ENCODE measurements at regions of chr2 and their contacts with region 1.

Region 1: GRCh38 chr2:67277450-67277849 is 119.7 kb upstream of the ETAA1 start:
- DNase-seq: no peak
- H3K4me3 ChIP-seq: no peak overlapping the region
- CTCF ChIP-seq: no peak

Region 2: DNA sequence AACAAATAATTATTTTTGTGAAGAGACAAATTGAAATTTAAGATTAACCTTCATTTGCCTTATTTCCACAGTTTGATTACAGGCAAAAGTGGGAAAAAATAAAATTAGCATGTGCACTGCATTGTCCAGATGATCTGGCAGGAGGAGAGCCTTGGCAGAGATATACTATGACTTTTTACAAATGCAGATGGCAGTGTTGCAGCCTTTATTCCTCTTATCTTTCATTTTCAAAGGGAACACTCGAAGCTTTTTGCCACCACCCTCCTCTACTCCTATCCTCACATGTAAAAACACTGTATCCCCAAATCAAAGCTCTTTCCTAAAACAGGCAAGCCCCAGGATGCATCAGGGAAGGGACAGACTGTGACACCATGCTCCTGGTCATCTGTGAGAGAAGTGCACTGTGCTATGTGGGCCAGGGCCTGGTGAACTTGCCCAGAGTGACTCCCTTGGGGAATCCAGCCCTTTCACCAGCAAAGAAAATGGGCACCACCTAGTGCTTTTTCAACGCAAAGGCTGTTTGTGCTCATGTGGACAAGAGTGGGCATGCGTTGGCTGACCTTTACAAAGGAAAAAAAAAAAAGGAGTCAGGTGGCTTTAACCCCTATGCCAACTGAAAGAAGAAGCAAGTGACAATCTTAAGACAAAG is 45.0 kb after region 1 on chr2:
- in situ Hi-C with region 1: loop called (anchors 5 kb)
- DNase-seq: peak; percentile 19
- H3K4me3 ChIP-seq: no peak overlapping the region
- CTCF ChIP-seq: peak; percentile 64

Region 3: DNA sequence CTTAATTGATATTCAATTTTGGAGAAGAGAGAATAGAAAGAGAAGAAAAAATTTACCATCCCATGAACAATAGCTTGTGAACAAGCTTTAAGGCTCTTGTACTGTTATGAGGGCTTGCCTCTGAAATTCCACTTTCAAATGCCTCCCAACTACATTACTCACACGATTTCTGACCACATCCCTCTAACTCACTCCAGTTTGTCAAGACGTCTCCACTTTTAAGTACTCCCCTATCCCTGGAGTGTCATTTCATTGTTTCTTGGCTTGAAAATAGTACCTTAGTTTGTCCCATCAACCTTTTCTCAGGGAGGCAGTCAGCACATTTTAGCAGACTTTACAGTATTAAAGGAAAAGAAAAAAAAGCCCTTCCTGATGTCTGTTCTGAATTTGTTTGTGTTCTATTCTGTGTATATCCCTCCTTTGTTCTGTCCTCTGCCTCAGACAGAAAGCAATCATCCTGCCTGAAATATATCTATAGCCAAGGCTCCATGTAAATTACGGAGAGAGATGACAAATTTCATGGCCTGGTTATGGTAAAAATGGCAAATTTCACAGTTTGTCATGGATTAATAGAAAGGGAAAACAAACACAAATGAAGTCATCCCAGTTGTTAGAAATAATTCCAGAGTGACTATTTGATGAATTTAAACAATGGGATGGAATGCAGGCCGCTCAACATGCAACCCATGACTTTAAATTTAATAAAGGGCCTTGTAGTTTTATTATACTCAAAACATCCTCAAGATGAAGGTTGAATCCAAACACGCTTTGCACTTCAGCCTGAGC is 348.4 kb after region 1 on chr2:
- in situ Hi-C with region 1: no loop called
- DNase-seq: peak; percentile 66
- H3K4me3 ChIP-seq: no peak overlapping the region
- CTCF ChIP-seq: no peak

Region 4: GRCh38 chr2:67650291-67651133 is 373.1 kb after region 1 on chr2:
- in situ Hi-C with region 1: no loop called
- DNase-seq: peak; percentile 88
- H3K4me3 ChIP-seq: no peak overlapping the region
- CTCF ChIP-seq: peak; percentile 85

Measured in astrocyte of the cerebellum (primary cell).